ENCODE measurements at regions of chr1 and their contacts with region 1.

Region 1: DNA sequence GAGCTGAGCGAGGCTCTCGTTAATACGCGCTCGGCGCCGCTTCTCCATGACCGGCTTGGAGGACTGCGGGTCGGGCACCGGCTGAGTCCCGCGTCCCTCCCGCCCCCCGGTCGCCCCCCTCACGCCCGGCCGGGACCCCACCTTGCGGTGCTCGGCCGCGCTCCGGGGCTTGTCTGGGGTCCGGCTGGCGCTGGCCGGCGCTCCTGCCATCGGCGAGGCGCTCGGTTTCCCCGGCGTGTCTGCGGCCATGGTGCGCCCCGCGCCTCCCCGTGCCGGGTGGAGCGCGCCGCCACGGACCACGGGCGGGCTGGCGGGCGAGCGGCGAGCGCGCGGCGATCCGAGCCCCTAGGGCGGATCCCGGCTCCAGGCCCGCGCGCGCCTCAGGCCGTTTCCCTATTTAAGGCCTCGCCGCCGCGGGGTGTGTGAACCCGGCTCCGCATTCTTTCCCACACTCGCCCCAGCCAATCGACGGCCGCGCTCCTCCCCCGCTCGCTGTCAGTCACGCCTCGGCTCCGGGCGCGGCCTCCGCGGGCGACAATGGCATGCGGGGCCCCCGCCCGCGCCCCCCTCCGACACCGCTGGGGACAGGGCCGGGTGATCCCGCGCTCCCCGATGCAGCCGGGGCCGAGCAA is at the start of gene HES4:
- DNase-seq: peak; percentile 92
- ATAC-seq: peak; percentile 51
- H3K4me3 Mint-ChIP-seq: peak within 1 kb of the TSS; percentile 70
- H3K27ac Mint-ChIP-seq: peak within 1 kb of the TSS; percentile 92; the same call in 1 of the 2 replicates
- H3K4me1 Mint-ChIP-seq: peaks cover 10% of the 10 kb centered on the region
- H3K27me3 Mint-ChIP-seq: peaks cover 76% of the 10 kb centered on the region
- CTCF ChIP-seq: no peak
- total RNA-seq, gene HES4: 4.5 to 10.7 TPM (median 8.3 TPM) in 3 replicates

Region 2: DNA sequence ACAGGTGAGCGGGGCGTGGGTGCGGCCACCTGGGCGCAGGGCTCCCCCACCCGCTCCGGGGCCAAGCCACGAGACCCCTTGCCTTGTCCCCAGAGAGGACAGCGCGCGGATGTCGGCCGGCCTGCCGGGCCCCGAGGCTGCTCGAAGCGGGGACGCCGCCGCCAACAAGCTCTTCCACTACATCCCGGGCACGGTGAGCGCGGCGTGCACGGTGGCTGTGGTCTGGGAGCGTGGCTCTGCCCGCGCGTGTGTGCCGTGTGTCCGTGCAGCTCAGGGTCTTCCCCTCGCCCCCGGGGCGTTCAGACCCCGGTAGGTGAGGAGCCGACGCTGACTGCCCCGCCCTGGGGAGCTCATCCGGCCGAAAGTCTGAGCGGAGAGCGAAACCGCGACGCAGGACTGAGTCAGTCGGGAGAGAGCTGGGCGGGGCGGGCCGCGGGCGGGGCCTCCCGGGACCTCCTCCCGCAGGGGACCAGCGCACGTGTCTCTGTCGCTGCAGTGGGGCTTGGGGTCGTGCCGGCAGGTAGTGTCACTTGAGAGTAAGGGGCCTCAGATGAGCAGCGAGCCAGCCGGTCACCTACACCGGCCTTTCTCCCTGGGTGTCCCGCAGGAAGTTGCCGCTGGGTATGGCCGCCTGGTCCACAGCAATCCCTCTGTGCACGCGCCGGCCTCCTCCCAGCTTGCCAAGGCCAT is 33.1 kb before region 1 on chr1:
- CTCF ChIA-PET with region 1: interaction called, 10 read pairs
- POLR2A ChIA-PET with region 1: no interaction called
- DNase-seq: peak; percentile 69
- ATAC-seq: peak; percentile 46
- H3K4me3 Mint-ChIP-seq: peak overlapping the region; percentile 62
- H3K27ac Mint-ChIP-seq: no peak overlapping the region
- H3K4me1 Mint-ChIP-seq: no peaks in the 10 kb centered on the region
- H3K27me3 Mint-ChIP-seq: peaks cover 40% of the 10 kb centered on the region
- CTCF ChIP-seq: no peak

Region 3: GRCh38 chr1:1013105-1013921 is 13.5 kb after region 1 on chr1 and contains the start of gene ISG15:
- CTCF ChIA-PET with region 1: interaction called, 36 read pairs
- POLR2A ChIA-PET with region 1: interaction called, 8 read pairs
- DNase-seq: peak; percentile 88
- ATAC-seq: peak; percentile 78
- H3K4me3 Mint-ChIP-seq: peak within 1 kb of the TSS; percentile 78
- H3K27ac Mint-ChIP-seq: peak within 1 kb of the TSS; percentile 95
- H3K4me1 Mint-ChIP-seq: peaks cover 29% of the 10 kb centered on the region
- H3K27me3 Mint-ChIP-seq: peaks cover 48% of the 10 kb centered on the region
- CTCF ChIP-seq: no peak
- total RNA-seq, gene ISG15: 29.5 to 38.3 TPM (median 36.1 TPM) in 3 replicates

Region 4: GRCh38 chr1:1024771-1025451 is 25.1 kb after region 1 on chr1:
- CTCF ChIA-PET with region 1: interaction called, 40 read pairs
- POLR2A ChIA-PET with region 1: interaction called, 11 read pairs
- DNase-seq: peak; percentile 85
- ATAC-seq: peak; percentile 73
- H3K4me3 Mint-ChIP-seq: no peak overlapping the region
- H3K27ac Mint-ChIP-seq: no peak overlapping the region
- H3K4me1 Mint-ChIP-seq: peaks cover 33% of the 10 kb centered on the region
- H3K27me3 Mint-ChIP-seq: no peaks in the 10 kb centered on the region; the same call in 1 of the 2 replicates
- CTCF ChIP-seq: no peak

Region 5: GRCh38 chr1:1040004-1040991 is 40.5 kb after region 1 on chr1:
- CTCF ChIA-PET with region 1: interaction called, 21 read pairs
- POLR2A ChIA-PET with region 1: interaction called, 3 read pairs
- DNase-seq: peak; percentile 83
- ATAC-seq: peak; percentile 85
- H3K4me3 Mint-ChIP-seq: peak overlapping the region; percentile 58
- H3K27ac Mint-ChIP-seq: no peak overlapping the region
- H3K4me1 Mint-ChIP-seq: peaks cover 5% of the 10 kb centered on the region
- H3K27me3 Mint-ChIP-seq: peaks cover 41% of the 10 kb centered on the region
- CTCF ChIP-seq: no peak